ENCODE measurements at regions of chr4 and their contacts with region 1.

Region 1: DNA sequence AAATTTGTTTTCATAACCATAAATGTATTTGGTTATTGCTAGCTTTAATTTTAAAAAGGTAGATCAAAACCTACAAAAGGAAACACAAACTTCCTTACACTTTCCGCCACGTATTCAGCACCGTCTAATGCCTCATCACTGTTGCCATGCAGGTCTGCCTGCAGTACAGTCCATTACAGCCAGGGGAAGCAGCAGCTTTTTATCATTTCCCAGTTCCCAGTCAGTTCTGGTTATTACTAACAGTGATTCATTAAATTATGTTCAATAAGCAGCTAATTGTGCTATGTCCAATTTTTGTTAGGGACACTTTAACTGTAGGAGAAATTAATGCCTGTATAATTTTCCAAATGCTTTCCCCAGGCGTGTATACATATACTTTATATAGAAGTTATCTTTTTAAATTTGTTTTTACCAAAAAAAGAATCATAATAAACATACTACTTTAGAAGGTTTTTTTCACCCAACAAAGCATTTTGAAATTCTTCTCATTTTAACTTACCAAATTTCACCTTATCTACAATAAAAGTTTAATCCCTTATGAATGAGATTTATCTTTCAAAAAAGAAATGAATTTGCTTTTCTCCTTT is 93.3 kb downstream of the ANXA3 start:
- DNase-seq: peak; percentile 84
- ATAC-seq: peak; percentile 96
- H3K4me3 ChIP-seq: no peak overlapping the region
- H3K4me3 Mint-ChIP-seq: peak overlapping the region; percentile 29
- H3K27ac ChIP-seq: peak overlapping the region in 1 of 2 donors; percentile 53
- H3K27ac Mint-ChIP-seq: peak overlapping the region; percentile 57
- H3K4me1 ChIP-seq: peaks cover 62 to 73% of the 10 kb centered on the region in 2 donors
- H3K4me1 Mint-ChIP-seq: peaks cover 67% of the 10 kb centered on the region
- H3K27me3 ChIP-seq: no peaks in the 10 kb centered on the region
- H3K27me3 Mint-ChIP-seq: no peaks in the 10 kb centered on the region
- CTCF ChIP-seq: peak; percentile 88

Region 2: DNA sequence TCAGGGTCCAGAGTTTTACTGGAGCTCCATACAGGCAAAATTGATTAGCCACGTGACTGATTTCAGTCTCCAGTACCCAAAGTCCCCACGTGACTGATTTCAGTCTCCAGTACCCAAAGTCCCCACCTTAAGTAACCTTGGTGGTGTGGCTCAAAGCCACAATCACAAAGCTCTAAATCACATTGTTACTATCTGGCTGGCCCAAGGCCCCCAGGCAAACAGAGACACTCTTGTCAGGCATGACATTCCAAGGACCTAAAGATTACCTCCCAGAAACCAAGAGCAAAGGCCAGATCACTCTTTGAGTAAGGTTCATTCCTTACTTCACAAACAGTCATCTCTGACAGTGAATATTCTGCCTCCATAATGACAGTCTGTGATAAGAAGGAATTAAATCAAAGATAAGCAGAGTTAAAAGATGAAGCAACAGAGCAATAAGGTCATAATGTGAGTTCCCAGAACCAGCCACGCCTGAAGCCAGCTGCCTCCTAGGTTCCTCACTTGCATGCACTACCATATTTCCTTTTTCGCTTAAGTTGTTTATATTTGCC is 14.8 kb before region 1 on chr4:
- CTCF ChIA-PET with region 1: interaction called, 46 read pairs
- POLR2A ChIA-PET with region 1: interaction called, 5 read pairs
- intact Hi-C with region 1: loop called (anchors 2 kb)
- DNase-seq: peak; percentile 40
- ATAC-seq: peak; percentile 22
- H3K4me3 ChIP-seq: peak overlapping the region in 1 of 5 experiments; percentile 37
- H3K4me3 Mint-ChIP-seq: peak overlapping the region; percentile 75
- H3K27ac ChIP-seq: peak overlapping the region; percentile 83 to 87
- H3K27ac Mint-ChIP-seq: peak overlapping the region; percentile 68
- H3K4me1 ChIP-seq: peaks cover 58 to 59% of the 10 kb centered on the region in 2 donors
- H3K4me1 Mint-ChIP-seq: peaks cover 78% of the 10 kb centered on the region
- H3K27me3 ChIP-seq: no peaks in the 10 kb centered on the region
- H3K27me3 Mint-ChIP-seq: no peaks in the 10 kb centered on the region
- CTCF ChIP-seq: no peak

Region 3: DNA sequence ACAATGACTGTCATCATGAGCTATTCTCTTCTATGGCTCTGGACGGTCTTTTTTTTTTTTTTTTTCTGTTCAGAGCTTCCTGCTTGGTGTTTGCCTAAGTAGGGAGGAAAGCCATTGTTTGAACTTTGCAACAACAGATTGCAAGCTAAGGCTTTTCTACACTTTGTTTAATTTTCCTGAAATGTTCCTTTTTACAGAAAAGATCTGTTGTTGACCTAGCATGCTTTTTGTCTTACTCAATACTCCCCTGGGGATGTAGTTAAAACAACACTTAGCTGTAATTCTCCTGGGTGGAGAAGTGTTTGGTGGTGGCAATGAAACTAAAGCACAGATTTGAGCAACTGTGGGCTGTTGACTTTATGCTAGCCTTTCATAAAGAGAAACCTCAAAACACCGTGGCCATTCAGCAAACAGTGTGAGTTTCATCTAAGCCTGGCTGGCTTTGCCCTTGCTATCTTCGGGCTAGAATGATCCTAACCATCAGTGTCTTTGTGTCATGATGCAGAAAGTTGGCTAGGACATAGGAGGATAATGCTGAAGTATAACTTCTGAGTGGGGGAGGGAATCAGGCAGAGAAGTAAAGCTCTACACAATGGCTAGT is 17.2 kb after region 1 on chr4:
- CTCF ChIA-PET with region 1: interaction called, 15 read pairs
- POLR2A ChIA-PET with region 1: interaction called, 9 read pairs
- intact Hi-C with region 1: loop called (anchors 2 kb)
- DNase-seq: peak; percentile 34
- ATAC-seq: peak; percentile 63
- H3K4me3 ChIP-seq: peak overlapping the region in 3 of 5 experiments; percentile 5 to 35 (median 12)
- H3K4me3 Mint-ChIP-seq: peak overlapping the region; percentile 75
- H3K27ac ChIP-seq: peak overlapping the region; percentile 16 to 67
- H3K27ac Mint-ChIP-seq: peak overlapping the region; percentile 89
- H3K4me1 ChIP-seq: peaks cover 56 to 61% of the 10 kb centered on the region in 2 donors
- H3K4me1 Mint-ChIP-seq: peaks cover 76% of the 10 kb centered on the region
- H3K27me3 ChIP-seq: no peaks in the 10 kb centered on the region
- H3K27me3 Mint-ChIP-seq: no peaks in the 10 kb centered on the region
- CTCF ChIP-seq: no peak

Region 4: DNA sequence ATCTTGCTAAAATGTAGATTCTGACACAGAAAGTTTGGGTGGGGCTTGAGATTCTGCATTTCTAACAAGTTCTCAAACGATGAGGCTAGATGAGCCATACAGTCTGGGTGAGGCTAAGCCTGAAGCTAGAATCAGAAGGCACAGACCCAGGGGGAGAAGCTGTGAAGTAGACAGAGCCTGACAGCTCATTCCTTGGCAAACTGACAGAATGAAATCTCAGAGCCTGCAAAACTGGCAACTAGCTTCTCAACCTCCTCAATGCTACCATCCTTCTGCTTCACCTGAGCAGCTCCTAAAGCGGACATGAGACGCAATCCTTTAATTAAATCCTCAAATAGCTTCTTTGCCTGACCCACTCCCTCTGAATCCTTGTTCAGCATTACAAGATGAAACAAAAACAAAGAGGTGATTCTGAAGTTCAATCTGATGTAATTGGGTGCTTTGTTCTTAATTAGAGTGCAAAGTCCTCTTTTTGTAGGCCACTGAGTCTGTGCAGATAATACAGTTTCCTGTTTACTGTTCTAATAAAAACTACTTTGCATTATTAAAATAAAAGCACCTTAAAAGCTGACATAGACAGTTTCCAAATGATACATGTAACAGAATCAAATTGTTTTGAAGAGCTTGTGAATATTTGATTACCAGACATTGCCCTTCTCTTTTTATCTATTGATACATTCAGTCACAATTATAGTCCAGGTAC is 60.3 kb after region 1 on chr4:
- CTCF ChIA-PET with region 1: interaction called, 12 read pairs
- POLR2A ChIA-PET with region 1: no interaction called
- intact Hi-C with region 1: no loop called
- DNase-seq: no peak
- ATAC-seq: no peak
- H3K4me3 ChIP-seq: no peak overlapping the region
- H3K4me3 Mint-ChIP-seq: no peak overlapping the region
- H3K27ac ChIP-seq: peak overlapping the region in 1 of 2 donors; percentile 21
- H3K27ac Mint-ChIP-seq: peak overlapping the region; percentile 72
- H3K4me1 ChIP-seq: peaks cover 22 to 34% of the 10 kb centered on the region in 2 donors
- H3K4me1 Mint-ChIP-seq: peaks cover 46% of the 10 kb centered on the region
- H3K27me3 ChIP-seq: no peaks in the 10 kb centered on the region
- H3K27me3 Mint-ChIP-seq: no peaks in the 10 kb centered on the region
- CTCF ChIP-seq: no peak

Region 5: GRCh38 chr4:78784236-78784865 is 139.5 kb after region 1 on chr4:
- CTCF ChIA-PET with region 1: interaction called, 14 read pairs
- POLR2A ChIA-PET with region 1: no interaction called
- intact Hi-C with region 1: no loop called
- DNase-seq: no peak
- ATAC-seq: no peak
- H3K4me3 ChIP-seq: no peak overlapping the region
- H3K4me3 Mint-ChIP-seq: no peak overlapping the region
- H3K27ac ChIP-seq: peak overlapping the region in 1 of 2 donors; percentile 30
- H3K27ac Mint-ChIP-seq: peak overlapping the region; percentile 22
- H3K4me1 ChIP-seq: peaks cover 60 to 83% of the 10 kb centered on the region in 2 donors
- H3K4me1 Mint-ChIP-seq: peaks cover 45% of the 10 kb centered on the region
- H3K27me3 ChIP-seq: no peaks in the 10 kb centered on the region
- H3K27me3 Mint-ChIP-seq: no peaks in the 10 kb centered on the region
- CTCF ChIP-seq: no peak

Region 6: DNA sequence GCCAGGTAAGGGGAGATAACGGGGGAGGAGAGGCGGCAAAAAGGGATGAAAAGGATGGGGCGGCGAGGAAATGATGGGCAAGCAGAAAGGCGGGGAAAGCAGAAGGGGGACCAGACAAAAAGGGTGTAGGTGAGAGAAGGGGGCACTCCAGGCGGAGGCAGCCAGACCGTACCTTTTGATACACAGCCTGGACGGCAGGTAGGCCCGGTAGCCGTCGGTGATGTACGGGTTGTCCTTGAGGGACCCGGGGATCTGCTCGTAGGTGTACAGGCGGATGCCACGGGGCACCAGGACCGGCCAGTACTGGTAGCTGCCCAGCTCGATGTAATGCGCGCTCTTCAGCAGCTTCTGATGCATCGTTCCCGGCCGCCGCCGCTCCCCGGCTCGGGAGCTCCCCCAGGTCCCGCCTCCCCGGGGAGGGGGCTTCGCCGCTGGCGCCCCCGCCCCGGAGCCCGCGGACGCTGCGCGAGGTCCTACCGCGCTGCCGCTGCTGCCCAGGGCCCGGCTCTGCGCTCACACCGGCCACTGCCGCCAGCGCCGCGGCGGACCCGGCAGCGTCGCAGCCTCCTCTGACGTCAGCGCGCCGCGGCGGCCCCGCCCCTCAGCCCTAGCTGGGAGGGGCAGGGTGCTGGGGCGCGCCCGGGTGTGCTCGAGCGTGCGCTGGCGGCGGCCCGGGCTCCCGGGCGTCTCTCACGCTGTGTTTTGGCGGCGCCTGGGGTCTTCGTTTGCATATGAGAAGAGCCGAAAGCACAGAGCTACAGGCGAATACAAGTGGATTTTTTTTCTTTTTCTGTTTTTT is 294.2 kb after region 1 on chr4 and contains the start of gene PAQR3:
- CTCF ChIA-PET with region 1: no interaction called
- POLR2A ChIA-PET with region 1: no interaction called
- intact Hi-C with region 1: loop called (anchors 5 kb)
- DNase-seq: peak; percentile 91
- ATAC-seq: peak; percentile 98
- H3K4me3 ChIP-seq: peak within 1 kb of the TSS; percentile 74 to 88 (median 85)
- H3K4me3 Mint-ChIP-seq: peak within 1 kb of the TSS; percentile 91
- H3K27ac ChIP-seq: peak within 1 kb of the TSS; percentile 45 to 75
- H3K27ac Mint-ChIP-seq: peak within 1 kb of the TSS; percentile 79
- H3K4me1 ChIP-seq: peaks cover 12 to 20% of the 10 kb centered on the region in 2 donors
- H3K4me1 Mint-ChIP-seq: peaks cover 26% of the 10 kb centered on the region
- H3K27me3 ChIP-seq: no peaks in the 10 kb centered on the region
- H3K27me3 Mint-ChIP-seq: peaks cover 3% of the 10 kb centered on the region
- CTCF ChIP-seq: no peak
- total RNA-seq, gene PAQR3: 12.6 and 13.5 TPM in 2 replicates